Lower lobe of right lung (tissue), 2 donors: ENCODE measurements at regions of chr3 and their contacts with region 1.

Region 1: GRCh38 chr3:133049491-133049890 is 11.3 kb downstream of the TMEM108 start:
- DNase-seq: no peak
- ATAC-seq: no peak
- H3K4me3 ChIP-seq: no peak overlapping the region
- H3K27ac ChIP-seq: no peak overlapping the region
- H3K4me1 ChIP-seq: no peaks in the 10 kb centered on the region
- H3K27me3 ChIP-seq: no peaks in the 10 kb centered on the region
- CTCF ChIP-seq: no peak

Region 2: DNA sequence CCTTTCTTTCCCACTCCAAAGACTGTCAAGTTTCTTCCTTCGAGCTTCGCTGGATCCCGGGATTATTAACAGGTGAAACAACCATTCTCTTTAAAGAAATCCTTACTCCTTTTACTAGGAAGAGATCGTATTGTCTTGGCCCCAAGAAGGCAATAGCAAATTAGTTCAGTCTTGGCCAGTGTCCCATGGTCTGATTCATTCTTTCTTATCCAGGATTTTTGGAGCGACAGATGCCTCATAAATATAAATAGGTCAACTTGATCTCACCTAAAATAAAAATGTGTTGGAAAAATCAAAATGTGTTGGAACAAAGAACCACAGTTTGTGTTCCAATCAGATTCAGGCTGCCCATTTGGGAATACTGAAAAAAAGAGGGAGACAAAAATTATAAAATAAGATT is 151.3 kb before region 1 on chr3:
- intact Hi-C with region 1: no loop called
- DNase-seq: no peak
- ATAC-seq: no peak
- H3K4me3 ChIP-seq: no peak overlapping the region
- H3K27ac ChIP-seq: no peak overlapping the region
- H3K4me1 ChIP-seq: no peaks in the 10 kb centered on the region
- H3K27me3 ChIP-seq: no peaks in the 10 kb centered on the region
- CTCF ChIP-seq: no peak

Region 3: DNA sequence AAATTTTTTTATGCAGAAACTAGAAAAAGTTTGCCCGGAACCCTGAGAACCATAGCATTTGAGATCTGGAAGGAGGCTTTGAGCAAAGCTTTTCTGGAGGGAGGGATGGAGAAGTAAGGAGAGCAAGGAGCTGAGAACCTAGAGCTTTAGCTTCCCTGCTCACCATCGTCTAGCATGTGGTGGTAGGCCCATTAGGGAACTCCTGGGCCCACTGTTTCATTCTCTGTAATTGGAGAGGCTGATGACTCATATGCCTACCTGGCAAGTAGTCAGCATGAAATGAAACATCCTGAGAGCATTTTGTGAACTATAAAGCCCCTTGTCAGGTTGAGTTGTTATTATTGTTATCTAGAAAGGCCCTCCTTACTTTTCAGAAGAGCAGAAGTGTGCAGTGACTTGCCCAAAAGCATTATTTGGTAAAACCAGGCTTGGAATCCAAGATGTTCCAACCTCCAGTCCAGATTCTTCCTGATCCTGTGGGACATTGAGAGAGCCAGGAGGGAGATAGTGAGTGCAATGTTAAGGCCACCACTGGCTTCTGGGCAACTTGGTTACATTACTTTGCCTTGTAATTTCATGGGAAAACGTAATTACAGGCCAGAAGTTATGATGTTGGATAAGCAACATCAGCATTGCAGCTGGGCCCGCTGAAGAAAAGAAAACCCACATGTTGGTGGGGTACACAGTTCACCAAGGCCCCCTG is 245.9 kb after region 1 on chr3:
- intact Hi-C with region 1: no loop called
- DNase-seq: no peak
- ATAC-seq: no peak
- H3K4me3 ChIP-seq: no peak overlapping the region
- H3K27ac ChIP-seq: no peak overlapping the region
- H3K4me1 ChIP-seq: peaks cover 18% of the 10 kb centered on the region
- H3K27me3 ChIP-seq: no peaks in the 10 kb centered on the region
- CTCF ChIP-seq: no peak

Region 4: DNA sequence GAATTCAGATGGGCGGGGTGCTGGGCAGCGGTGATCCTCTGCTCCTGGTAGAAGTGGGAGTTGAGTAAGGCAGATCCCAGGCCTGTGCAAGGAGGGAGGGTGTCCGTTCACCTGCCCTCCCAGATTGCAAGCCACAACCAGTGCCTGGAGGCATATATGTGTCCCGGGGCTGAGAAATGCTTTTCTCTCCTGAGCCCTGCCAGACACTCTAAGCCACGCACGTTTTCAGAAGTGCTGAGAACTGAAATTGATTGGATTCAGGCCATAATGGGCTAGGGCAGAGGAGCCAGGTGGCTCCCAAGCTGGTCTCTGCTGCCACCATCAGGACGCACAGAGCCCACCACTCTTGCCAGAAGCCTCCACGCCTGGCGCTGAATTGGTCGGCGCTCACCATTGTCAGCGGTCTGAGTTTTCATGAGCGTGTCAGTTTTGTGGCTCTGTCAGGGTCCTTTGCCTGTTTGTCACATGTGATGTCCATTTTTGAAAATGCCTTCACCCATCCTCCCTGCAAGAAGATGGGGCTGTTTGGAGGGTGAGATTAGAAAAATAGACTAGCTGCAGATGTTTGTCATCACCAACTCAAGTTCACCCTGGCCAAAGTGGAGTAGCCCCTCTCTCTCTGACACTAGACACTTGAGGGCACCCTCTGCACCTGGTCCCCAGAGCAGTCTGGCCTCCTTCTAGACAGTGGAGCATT is 335.0 kb after region 1 on chr3:
- intact Hi-C with region 1: loop called (anchors 5 kb)
- DNase-seq: peak; percentile 63
- ATAC-seq: peak; percentile 80 to 84
- H3K4me3 ChIP-seq: no peak overlapping the region
- H3K27ac ChIP-seq: no peak overlapping the region
- H3K4me1 ChIP-seq: peaks cover 11% of the 10 kb centered on the region
- H3K27me3 ChIP-seq: no peaks in the 10 kb centered on the region
- CTCF ChIP-seq: peak; percentile 87